H1 (cell line): ENCODE measurements at regions of chr17 and their contacts with region 1.

Region 1: GRCh38 chr17:57783106-57783742 is 38.1 kb upstream of the CCDC182 start:
- DNase-seq: peak; percentile 70 to 99
- H3K4me3 ChIP-seq: peak overlapping the region in 1 of 4 experiments; percentile 45; a peak in 2 of 8 replicates
- H3K27ac ChIP-seq: no peak overlapping the region
- H3K4me1 ChIP-seq: peaks cover 5 to 12% (median 8%) of the 10 kb centered on the region in 4 experiments; a peak in 6 of 7 replicates
- H3K27me3 ChIP-seq: peaks cover 0 to 13% (median 7%) of the 10 kb centered on the region in 4 experiments; a peak in 6 of 7 replicates
- CTCF ChIP-seq: peak; percentile 88 to 94 (median 94)
- EP300 ChIP-seq: peak; percentile 33 to 63; a peak in 2 of 3 replicates
- POLR2A ChIP-seq: no peak
- RAD21 ChIP-seq: peak; percentile 81 to 83

Region 2: DNA sequence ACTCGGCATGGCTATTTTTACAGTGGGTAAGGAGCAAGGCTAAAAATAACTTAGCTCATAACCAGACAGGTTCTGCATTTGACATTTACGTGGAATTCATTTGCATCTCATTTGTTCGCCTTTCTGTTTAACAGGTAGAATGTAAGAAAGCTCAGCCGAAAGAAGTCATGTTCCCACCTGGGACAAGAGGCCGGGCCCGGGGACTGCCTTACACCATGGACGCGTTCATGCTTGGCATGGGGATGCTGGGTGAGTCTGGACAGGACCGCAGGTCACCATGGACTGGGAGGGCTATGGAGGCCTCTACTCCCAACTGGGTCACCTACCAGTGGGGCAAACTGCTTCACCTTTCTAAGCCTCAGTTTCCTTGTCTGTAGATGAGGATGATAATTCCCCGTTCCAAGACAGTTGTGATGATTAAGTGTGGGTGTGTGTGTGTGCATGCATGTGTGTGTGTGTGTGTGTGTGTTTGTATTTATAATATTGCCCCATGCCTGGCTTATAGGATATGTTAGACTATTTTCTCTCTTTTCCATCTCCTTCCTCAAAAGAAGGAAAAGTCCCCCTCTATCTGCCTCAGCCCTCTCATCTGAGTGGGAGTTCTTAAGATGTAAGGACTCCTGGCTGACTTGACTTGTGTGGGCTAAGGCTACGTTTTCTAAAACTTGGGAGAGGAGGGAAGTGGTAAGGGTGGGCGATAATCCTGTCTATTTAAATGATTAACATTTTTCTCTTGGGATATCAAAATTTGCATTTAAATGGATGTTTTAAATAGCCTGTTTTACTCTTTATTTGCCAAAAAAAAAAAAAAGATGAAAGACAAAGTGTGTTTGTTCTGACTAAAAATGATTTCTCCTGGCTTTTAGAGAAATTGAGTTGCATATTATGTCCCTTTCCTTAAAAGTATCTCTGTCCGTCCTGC is 167.1 kb before region 1 on chr17:
- CTCF ChIA-PET with region 1: no interaction called
- POLR2A ChIA-PET with region 1: no interaction called
- DNase-seq: no peak
- H3K4me3 ChIP-seq: no peak overlapping the region
- H3K27ac ChIP-seq: no peak overlapping the region
- H3K4me1 ChIP-seq: peaks cover 4 to 14% (median 11%) of the 10 kb centered on the region in 4 experiments; a peak in 6 of 7 replicates
- H3K27me3 ChIP-seq: no peaks in the 10 kb centered on the region
- CTCF ChIP-seq: no peak
- EP300 ChIP-seq: no peak
- POLR2A ChIP-seq: no peak
- RAD21 ChIP-seq: no peak

Region 3: GRCh38 chr17:57739402-57740392 is 43.5 kb before region 1 on chr17:
- CTCF ChIA-PET with region 1: interaction called, 14 read pairs
- POLR2A ChIA-PET with region 1: no interaction called
- DNase-seq: no peak
- H3K4me3 ChIP-seq: no peak overlapping the region
- H3K27ac ChIP-seq: no peak overlapping the region
- H3K4me1 ChIP-seq: no peaks in the 10 kb centered on the region; a peak in 1 of 7 replicates
- H3K27me3 ChIP-seq: no peaks in the 10 kb centered on the region
- CTCF ChIP-seq: peak; percentile 3 to 72 (median 54)
- EP300 ChIP-seq: no peak
- POLR2A ChIP-seq: no peak
- RAD21 ChIP-seq: peak; percentile 66 to 73

Region 4: DNA sequence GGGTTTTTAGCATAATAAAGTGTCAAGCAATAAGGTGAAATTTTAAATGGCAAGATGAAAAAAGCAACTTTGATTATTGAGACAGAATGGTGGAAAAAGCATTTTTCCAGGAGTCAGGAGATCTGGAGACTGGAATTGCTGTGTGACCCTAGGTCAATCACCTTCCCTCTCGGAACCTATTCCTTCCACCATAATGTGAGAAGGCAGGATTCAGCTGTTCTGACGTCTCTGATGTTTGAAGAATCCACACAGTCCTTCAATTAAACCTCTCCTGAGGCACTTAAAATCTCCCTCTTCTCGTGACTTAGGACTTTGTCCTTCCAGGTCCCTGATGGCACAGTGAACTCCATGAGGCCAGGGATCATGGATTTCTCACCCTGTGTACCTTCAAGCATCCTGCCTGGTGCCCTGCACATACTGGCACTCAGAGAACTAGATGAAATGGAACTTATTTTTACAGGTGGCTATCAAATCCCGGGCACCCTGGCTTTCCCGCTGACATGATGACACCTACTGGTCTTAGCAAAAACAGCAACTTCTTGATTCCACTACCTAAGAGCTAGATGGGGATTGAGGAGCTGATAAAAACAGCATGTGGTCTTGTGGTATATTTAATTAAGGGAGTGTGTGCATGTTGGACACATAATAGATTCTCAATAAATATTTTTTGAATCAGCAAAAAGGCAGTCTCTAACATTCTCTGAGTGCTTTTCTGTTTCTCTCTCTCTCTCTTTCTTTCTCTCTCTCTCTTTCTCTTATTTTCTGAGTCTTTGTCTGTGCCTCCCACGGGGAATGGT is 35.8 kb before region 1 on chr17:
- CTCF ChIA-PET with region 1: interaction called, 23 read pairs
- POLR2A ChIA-PET with region 1: no interaction called
- DNase-seq: no peak
- H3K4me3 ChIP-seq: no peak overlapping the region
- H3K27ac ChIP-seq: no peak overlapping the region
- H3K4me1 ChIP-seq: peaks cover 0 to 2% (median 0%) of the 10 kb centered on the region in 4 experiments; a peak in 1 of 7 replicates
- H3K27me3 ChIP-seq: no peaks in the 10 kb centered on the region
- CTCF ChIP-seq: peak; percentile 48 to 76 (median 69)
- EP300 ChIP-seq: no peak
- POLR2A ChIP-seq: no peak
- RAD21 ChIP-seq: peak; percentile 88 to 89

Region 5: GRCh38 chr17:57761887-57762286 is 21.3 kb before region 1 on chr17:
- CTCF ChIA-PET with region 1: interaction called, 69 read pairs
- POLR2A ChIA-PET with region 1: no interaction called
- DNase-seq: no peak
- H3K4me3 ChIP-seq: peak overlapping the region in 1 of 4 experiments; percentile 10; a peak in 2 of 8 replicates
- H3K27ac ChIP-seq: no peak overlapping the region
- H3K4me1 ChIP-seq: peaks cover 3 to 12% (median 7%) of the 10 kb centered on the region in 4 experiments
- H3K27me3 ChIP-seq: no peaks in the 10 kb centered on the region
- CTCF ChIP-seq: peak in 1 of 3 experiments; percentile 17; a peak in 1 of 4 replicates
- EP300 ChIP-seq: no peak
- POLR2A ChIP-seq: no peak
- RAD21 ChIP-seq: no peak

Region 6: GRCh38 chr17:57772774-57773173 is 10.4 kb before region 1 on chr17:
- CTCF ChIA-PET with region 1: interaction called, 69 read pairs
- POLR2A ChIA-PET with region 1: no interaction called
- DNase-seq: no peak
- H3K4me3 ChIP-seq: no peak overlapping the region
- H3K27ac ChIP-seq: no peak overlapping the region
- H3K4me1 ChIP-seq: no peaks in the 10 kb centered on the region; a peak in 1 of 7 replicates
- H3K27me3 ChIP-seq: no peaks in the 10 kb centered on the region
- CTCF ChIP-seq: peak; percentile 16 to 41 (median 23); a peak in 3 of 4 replicates
- EP300 ChIP-seq: no peak
- POLR2A ChIP-seq: no peak
- RAD21 ChIP-seq: peak; percentile 52 to 61

Region 7: DNA sequence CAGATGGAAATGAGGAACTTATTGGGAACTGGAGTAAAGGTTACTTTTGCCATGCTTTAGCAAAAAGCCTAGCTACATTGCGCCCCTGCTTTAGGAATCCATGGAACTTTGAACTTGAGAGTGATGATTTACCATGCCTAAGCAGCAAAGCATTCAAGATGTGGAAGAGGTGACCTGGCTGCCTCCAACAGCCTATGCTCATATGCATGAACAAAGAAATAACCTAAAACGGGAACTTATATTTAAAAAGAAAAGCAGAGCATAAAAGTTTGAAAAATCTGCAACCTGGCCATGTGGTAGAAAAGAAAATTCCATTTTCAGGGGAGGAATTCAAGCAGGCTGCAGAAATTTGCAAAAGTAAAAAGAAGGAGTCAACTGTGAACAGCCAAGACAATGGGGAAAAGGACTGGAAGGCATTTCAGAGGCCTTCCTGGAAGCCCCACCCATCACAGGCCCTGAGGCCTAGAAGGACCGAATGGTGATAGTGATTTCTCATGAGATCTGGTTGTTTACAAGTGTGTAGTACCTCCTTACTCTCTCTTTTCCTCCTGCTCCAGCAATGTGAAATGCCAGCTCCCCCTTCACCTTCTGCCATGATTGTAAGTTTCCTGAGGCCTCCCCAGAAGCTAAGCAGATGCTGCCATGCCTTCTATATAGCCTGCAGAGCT is 18.0 kb after region 1 on chr17:
- CTCF ChIA-PET with region 1: interaction called, 18 read pairs
- POLR2A ChIA-PET with region 1: no interaction called
- DNase-seq: no peak
- H3K4me3 ChIP-seq: no peak overlapping the region
- H3K27ac ChIP-seq: no peak overlapping the region
- H3K4me1 ChIP-seq: peaks cover 0 to 5% (median 3%) of the 10 kb centered on the region in 4 experiments; a peak in 2 of 7 replicates
- H3K27me3 ChIP-seq: no peaks in the 10 kb centered on the region; a peak in 1 of 7 replicates
- CTCF ChIP-seq: no peak
- EP300 ChIP-seq: no peak
- POLR2A ChIP-seq: no peak
- RAD21 ChIP-seq: no peak

Region 8: GRCh38 chr17:57823469-57824401 is 40.5 kb after region 1 on chr17:
- CTCF ChIA-PET with region 1: interaction called, 18 read pairs
- POLR2A ChIA-PET with region 1: no interaction called
- DNase-seq: no peak
- H3K4me3 ChIP-seq: no peak overlapping the region
- H3K27ac ChIP-seq: no peak overlapping the region
- H3K4me1 ChIP-seq: no peaks in the 10 kb centered on the region; a peak in 1 of 7 replicates
- H3K27me3 ChIP-seq: no peaks in the 10 kb centered on the region; a peak in 1 of 7 replicates
- CTCF ChIP-seq: no peak
- EP300 ChIP-seq: no peak
- POLR2A ChIP-seq: no peak
- RAD21 ChIP-seq: no peak